Psoas muscle (tissue), 8 donors: ENCODE measurements at regions of chr2 and their contacts with region 1.

Region 1: DNA sequence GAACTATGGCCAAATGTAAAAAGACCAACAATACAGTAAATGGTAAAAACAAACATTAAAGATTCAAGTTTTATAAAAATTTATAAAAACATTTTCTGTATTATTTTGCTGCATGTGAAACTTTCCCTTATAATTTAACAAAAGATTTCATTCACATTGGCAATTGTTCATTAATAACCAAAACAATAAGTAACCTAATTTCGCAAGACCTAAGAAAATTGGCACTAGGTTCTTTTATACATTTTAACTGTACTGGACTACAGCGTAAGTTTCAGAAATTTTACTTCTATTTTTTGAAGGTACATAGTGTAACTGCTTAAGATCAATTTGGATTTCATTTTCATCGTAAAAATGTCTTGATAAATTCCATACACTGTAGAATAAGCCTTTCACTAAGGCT is 77.2 kb downstream of the FANCL start:
- DNase-seq: no peak
- ATAC-seq: no peak
- H3K4me3 ChIP-seq: no peak overlapping the region
- H3K27ac ChIP-seq: no peak overlapping the region
- H3K4me1 ChIP-seq: no peaks in the 10 kb centered on the region
- H3K27me3 ChIP-seq: no peaks in the 10 kb centered on the region
- CTCF ChIP-seq: no peak

Region 2: DNA sequence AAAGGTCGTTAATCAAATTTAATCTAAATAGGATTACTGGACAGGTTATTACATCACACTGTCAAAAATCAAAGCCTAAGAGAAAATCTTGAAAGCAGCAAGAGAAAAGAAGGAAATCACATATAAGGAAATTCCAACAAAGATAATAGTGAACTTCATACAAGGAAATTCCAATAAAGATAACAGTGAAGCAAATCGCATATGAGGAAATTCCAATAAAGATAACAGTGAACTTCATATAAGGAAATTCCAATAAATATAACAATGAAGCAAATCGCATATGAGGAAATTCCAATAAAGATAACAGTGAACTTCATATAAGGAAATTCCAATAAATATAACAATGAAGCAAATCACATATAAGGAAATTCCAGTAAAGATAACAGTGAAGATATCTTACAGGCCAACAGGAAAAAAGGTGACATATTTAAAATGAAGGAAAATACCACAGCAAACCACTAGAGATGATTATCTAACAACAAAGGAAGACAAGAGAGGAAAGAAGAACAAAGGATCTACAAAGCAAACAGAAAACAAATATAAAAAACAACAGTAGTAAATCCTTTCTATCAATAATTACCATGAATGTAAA is 1192.4 kb before region 1 on chr2:
- intact Hi-C with region 1: no loop called
- DNase-seq: no peak
- ATAC-seq: no peak
- H3K4me3 ChIP-seq: no peak overlapping the region
- H3K27ac ChIP-seq: no peak overlapping the region
- H3K4me1 ChIP-seq: no peaks in the 10 kb centered on the region
- H3K27me3 ChIP-seq: no peaks in the 10 kb centered on the region
- CTCF ChIP-seq: no peak

Region 3: DNA sequence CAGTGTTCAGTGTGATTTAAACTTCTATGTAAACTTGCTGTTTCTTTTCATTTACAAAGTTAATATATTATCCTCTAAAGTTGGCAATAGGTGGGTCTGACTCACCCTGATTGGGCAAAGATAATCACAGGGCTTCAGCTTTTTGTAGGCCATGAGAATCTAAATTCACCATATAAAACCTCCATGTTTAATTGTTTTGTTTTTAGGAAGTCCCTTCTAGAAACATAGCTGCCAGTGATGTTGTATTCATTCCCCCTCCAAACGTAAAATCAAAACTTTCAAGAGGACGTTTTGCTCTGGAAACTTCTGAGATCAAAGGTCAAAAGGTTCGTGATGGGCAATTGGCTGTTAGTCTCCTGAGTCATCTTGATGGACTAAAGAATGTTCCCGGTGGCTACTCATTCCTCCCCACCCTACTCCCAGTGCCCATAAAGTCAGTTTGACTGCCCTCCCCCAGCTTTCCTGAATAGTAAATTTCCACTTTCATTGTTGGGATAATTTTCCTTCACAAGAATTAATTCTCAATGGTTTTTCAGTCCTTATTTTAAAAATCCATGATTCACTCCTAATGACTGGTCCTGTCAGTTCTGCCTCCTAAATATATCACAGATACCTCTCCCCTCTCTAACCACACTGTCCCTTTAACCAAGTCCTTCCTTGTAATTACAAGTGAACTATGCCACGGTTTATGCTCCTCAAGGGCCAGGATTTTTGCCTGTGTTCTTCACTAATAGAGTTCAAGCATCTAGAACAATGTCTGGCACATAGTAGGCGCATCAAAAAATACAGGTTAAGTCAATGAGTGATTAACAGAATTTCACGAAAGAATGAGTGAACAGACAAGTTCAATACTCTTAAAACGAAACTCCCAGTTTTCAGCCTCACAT is 281.7 kb before region 1 on chr2:
- intact Hi-C with region 1: no loop called
- DNase-seq: no peak
- ATAC-seq: no peak
- H3K4me3 ChIP-seq: no peak overlapping the region
- H3K27ac ChIP-seq: no peak overlapping the region
- H3K4me1 ChIP-seq: no peaks in the 10 kb centered on the region
- H3K27me3 ChIP-seq: no peaks in the 10 kb centered on the region
- CTCF ChIP-seq: no peak

Region 4: DNA sequence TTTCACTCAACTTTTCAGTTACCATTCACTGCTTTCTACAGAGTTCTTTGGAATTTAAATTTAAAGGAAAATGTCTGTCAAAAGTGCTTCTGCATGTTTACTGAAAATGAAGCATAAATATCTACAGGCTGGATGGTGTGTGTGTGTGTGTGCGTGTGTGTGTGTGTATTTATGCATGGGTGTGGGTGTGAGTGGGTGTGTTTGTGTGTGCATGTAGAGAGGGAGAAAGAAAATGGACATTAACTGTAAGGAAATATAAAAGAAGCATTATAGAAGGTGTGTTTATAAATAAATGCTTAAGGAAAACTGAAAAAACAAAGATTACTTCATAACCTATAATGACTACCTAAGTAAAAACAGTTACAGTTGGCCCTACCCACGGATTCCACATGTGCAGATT is 34.0 kb after region 1 on chr2:
- intact Hi-C with region 1: loop called in 1 of 2 experiments (anchors 2 kb)
- DNase-seq: no peak
- ATAC-seq: no peak
- H3K4me3 ChIP-seq: no peak overlapping the region
- H3K27ac ChIP-seq: no peak overlapping the region
- H3K4me1 ChIP-seq: no peaks in the 10 kb centered on the region
- H3K27me3 ChIP-seq: no peaks in the 10 kb centered on the region
- CTCF ChIP-seq: no peak